ENCODE measurements at regions of chr3 and their contacts with region 1.

Region 1: DNA sequence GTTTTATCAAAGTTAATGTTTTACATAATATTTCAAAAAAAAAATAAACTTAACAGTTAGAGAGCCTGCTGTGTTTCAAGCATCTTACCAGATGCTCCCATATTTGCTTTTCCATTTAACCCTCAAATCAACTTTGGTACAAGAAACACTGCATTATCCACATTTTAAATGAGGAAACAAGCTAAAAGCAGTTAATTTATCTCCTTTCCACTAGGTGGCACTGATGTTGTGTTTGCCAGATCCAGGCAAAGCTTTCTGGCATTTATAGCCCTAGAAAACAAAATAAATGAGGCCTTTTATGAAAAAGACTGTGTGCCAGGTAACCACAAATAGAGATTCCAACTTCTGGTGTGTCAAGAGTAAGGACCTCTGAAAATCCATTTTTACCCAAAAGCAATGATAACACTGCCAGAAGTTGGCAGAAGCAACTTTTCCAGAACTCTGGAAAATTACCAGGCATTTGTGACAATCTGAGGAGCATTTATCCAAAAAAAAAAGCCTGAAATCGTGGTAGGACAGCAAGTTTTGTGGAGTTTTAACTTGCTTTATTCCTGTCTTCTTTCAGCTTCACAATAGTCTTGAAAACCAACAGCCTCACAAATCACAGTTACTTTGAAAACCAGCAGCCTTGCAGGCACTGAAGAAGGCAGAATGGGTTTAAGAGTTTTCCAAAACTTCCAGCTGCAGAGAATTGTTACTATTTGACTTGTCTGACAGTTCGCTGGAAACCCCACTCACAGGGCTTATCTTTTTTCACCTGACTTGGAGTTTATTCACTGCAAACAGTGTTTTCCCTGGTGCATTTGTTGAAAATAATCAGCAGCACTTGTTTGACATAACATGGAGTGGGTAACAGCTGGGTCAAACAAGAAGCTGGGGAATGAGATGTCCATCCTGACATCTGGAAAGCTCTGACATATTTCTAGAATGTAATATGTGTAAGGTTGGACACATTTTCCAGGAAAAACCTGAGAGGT is 9.2 kb downstream of the FAM162A start:
- DNase-seq: no peak
- ATAC-seq: peak; percentile 59
- H3K4me3 ChIP-seq: no peak overlapping the region
- H3K27ac ChIP-seq: no peak overlapping the region
- H3K4me1 ChIP-seq: no peaks in the 10 kb centered on the region; the same call in 1 of the 2 replicates
- H3K27me3 ChIP-seq: no peaks in the 10 kb centered on the region
- CTCF ChIP-seq: peak; percentile 52 to 77 (median 75); a peak in 5 of 6 replicates
- EP300 ChIP-seq: no peak
- POLR2A ChIP-seq: no peak
- RAD21 ChIP-seq: peak; percentile 88

Region 2: DNA sequence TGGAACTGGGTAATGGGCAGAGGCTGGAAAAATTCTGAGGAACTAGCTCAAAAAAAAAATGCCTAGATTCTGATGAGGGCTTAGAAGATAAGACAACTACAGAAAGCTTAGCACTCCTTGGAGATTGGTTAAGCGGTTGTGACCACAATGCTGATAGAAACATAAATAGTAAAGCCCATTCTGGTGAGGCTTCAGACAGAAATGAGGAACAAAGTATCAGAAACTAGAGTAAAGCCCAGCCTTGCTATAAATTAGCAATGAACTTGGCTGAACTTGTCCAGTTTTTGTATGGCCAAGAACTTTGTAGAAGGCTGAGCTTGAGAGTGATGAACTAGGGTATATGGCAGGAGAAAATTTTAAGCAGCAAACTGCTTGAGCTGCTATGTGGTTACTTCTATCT is 669.0 kb before region 1 on chr3:
- CTCF ChIA-PET with region 1: no interaction called
- POLR2A ChIA-PET with region 1: no interaction called
- RAD21 ChIA-PET with region 1: no interaction called
- SMC1A ChIA-PET with region 1: no interaction called
- in situ Hi-C with region 1: no loop called
- intact Hi-C with region 1: no loop called
- DNase-seq: peak; percentile 57
- ATAC-seq: peak; percentile 96
- H3K4me3 ChIP-seq: no peak overlapping the region
- H3K27ac ChIP-seq: no peak overlapping the region
- H3K4me1 ChIP-seq: peaks cover 11% of the 10 kb centered on the region
- H3K27me3 ChIP-seq: no peaks in the 10 kb centered on the region
- CTCF ChIP-seq: no peak
- EP300 ChIP-seq: no peak
- POLR2A ChIP-seq: no peak
- RAD21 ChIP-seq: no peak

Region 3: GRCh38 chr3:122235147-122235546 is 158.0 kb before region 1 on chr3:
- CTCF ChIA-PET with region 1: no interaction called
- POLR2A ChIA-PET with region 1: no interaction called
- RAD21 ChIA-PET with region 1: no interaction called
- SMC1A ChIA-PET with region 1: no interaction called
- in situ Hi-C with region 1: no loop called
- intact Hi-C with region 1: no loop called
- DNase-seq: peak; percentile 46
- ATAC-seq: peak; percentile 63
- H3K4me3 ChIP-seq: peak overlapping the region; percentile 22; the same call in 1 of the 2 replicates
- H3K27ac ChIP-seq: peak overlapping the region; percentile 86
- H3K4me1 ChIP-seq: peaks cover 38% of the 10 kb centered on the region
- H3K27me3 ChIP-seq: no peaks in the 10 kb centered on the region
- CTCF ChIP-seq: no peak
- EP300 ChIP-seq: no peak
- POLR2A ChIP-seq: no peak
- RAD21 ChIP-seq: no peak

Region 4: GRCh38 chr3:122403489-122403888 is 10.3 kb after region 1 on chr3:
- CTCF ChIA-PET with region 1: interaction called, 26 read pairs
- POLR2A ChIA-PET with region 1: no interaction called
- RAD21 ChIA-PET with region 1: interaction called, 5 read pairs
- SMC1A ChIA-PET with region 1: interaction called, 70 read pairs
- in situ Hi-C with region 1: no loop called
- intact Hi-C with region 1: no loop called
- DNase-seq: no peak
- ATAC-seq: no peak
- H3K4me3 ChIP-seq: no peak overlapping the region
- H3K27ac ChIP-seq: no peak overlapping the region
- H3K4me1 ChIP-seq: no peaks in the 10 kb centered on the region
- H3K27me3 ChIP-seq: no peaks in the 10 kb centered on the region
- CTCF ChIP-seq: no peak
- EP300 ChIP-seq: no peak
- POLR2A ChIP-seq: no peak
- RAD21 ChIP-seq: no peak

Region 5: GRCh38 chr3:122409446-122409845 is 16.3 kb after region 1 on chr3:
- CTCF ChIA-PET with region 1: interaction called, 26 read pairs
- POLR2A ChIA-PET with region 1: interaction called, 11 read pairs
- RAD21 ChIA-PET with region 1: interaction called, 5 read pairs
- SMC1A ChIA-PET with region 1: interaction called, 70 read pairs
- in situ Hi-C with region 1: no loop called
- intact Hi-C with region 1: no loop called
- DNase-seq: no peak
- ATAC-seq: peak; percentile 39
- H3K4me3 ChIP-seq: no peak overlapping the region
- H3K27ac ChIP-seq: no peak overlapping the region
- H3K4me1 ChIP-seq: peaks cover 2% of the 10 kb centered on the region; the same call in 1 of the 2 replicates
- H3K27me3 ChIP-seq: no peaks in the 10 kb centered on the region
- CTCF ChIP-seq: no peak
- EP300 ChIP-seq: no peak
- POLR2A ChIP-seq: no peak
- RAD21 ChIP-seq: no peak

Region 6: DNA sequence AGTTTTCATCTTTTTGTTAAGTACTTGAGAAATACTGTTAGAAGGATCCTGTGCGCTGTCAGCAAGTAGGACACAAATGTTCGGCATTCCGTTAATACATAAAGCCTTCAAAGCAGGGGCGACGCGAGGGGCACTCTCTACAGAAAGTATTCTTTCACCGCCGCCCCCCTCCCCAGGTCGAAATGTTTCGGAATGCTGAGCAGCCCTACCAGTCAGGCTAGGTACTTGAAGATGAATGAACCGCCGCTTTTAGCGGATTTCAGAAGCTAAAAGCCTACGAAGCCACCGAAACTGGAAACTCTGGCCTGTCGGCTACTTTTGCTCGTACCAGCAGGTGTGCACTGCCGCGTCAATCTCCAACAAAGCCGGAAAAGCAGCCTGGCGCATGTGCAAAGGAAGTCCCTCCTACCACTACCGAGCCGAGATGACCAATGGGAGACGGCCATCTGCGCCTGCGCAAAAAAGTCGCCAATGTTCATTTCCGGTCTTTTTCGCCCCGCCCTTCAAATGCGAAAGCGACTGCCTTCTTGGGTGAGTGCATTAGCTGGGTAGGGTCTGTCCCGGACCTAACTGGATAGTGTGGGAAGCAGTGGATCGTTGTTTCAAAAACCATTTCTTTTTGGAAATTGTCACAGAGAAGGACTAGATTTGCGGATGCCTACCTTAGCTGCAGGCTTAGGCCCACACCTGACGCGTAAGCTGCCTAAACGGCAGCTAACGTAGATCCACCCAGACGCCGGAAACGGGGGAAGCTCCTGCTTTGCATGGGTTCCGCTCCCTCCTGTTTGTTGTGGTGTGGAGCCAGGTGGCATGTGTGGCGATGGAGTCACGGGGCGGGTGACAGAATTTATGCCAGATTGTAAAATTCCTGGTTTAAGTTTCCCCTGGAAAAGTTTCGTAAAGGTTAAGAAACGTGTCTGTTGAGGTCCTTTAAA is 22.8 kb after region 1 on chr3 and contains the start of gene WDR5B:
- CTCF ChIA-PET with region 1: interaction called, 29 read pairs
- POLR2A ChIA-PET with region 1: interaction called, 11 read pairs
- RAD21 ChIA-PET with region 1: interaction called, 8 read pairs
- SMC1A ChIA-PET with region 1: interaction called, 70 read pairs
- in situ Hi-C with region 1: no loop called
- intact Hi-C with region 1: no loop called
- DNase-seq: peak; percentile 98
- ATAC-seq: peak; percentile 95
- H3K4me3 ChIP-seq: peak within 1 kb of the TSS; percentile 77
- H3K27ac ChIP-seq: peak within 1 kb of the TSS; percentile 91
- H3K4me1 ChIP-seq: peaks cover 14% of the 10 kb centered on the region; the same call in 1 of the 2 replicates
- H3K27me3 ChIP-seq: no peaks in the 10 kb centered on the region
- CTCF ChIP-seq: no peak; a peak in 1 of 6 replicates
- EP300 ChIP-seq: peak; percentile 33 to 43; a peak in 1 of 4 replicates
- POLR2A ChIP-seq: peak; percentile 93
- RAD21 ChIP-seq: no peak
- polyA plus RNA-seq, gene WDR5B: 1.7 to 2.4 TPM

Region 7: GRCh38 chr3:122458992-122459391 is 65.8 kb after region 1 on chr3:
- CTCF ChIA-PET with region 1: interaction called, 35 read pairs
- POLR2A ChIA-PET with region 1: interaction called, 3 read pairs
- RAD21 ChIA-PET with region 1: interaction called, 5 read pairs
- SMC1A ChIA-PET with region 1: interaction called, 17 read pairs
- in situ Hi-C with region 1: no loop called
- intact Hi-C with region 1: no loop called
- DNase-seq: no peak
- ATAC-seq: 0 out of 3 replicates have a peak, but pooled peaks have one; percentile 30
- H3K4me3 ChIP-seq: no peak overlapping the region
- H3K27ac ChIP-seq: no peak overlapping the region
- H3K4me1 ChIP-seq: no peaks in the 10 kb centered on the region
- H3K27me3 ChIP-seq: no peaks in the 10 kb centered on the region
- CTCF ChIP-seq: peak in 2 of 3 experiments; percentile 15 to 44; a peak in 2 of 6 replicates
- EP300 ChIP-seq: no peak
- POLR2A ChIP-seq: no peak
- RAD21 ChIP-seq: peak; percentile 63

Region 8: GRCh38 chr3:122533931-122534334 is 140.8 kb after region 1 on chr3:
- CTCF ChIA-PET with region 1: no interaction called
- POLR2A ChIA-PET with region 1: no interaction called
- RAD21 ChIA-PET with region 1: interaction called, 5 read pairs
- SMC1A ChIA-PET with region 1: interaction called, 4 read pairs
- in situ Hi-C with region 1: no loop called
- intact Hi-C with region 1: loop called (anchors 10 kb)
- DNase-seq: peak; percentile 79
- ATAC-seq: peak; percentile 100
- H3K4me3 ChIP-seq: no peak overlapping the region
- H3K27ac ChIP-seq: no peak overlapping the region; the same call in 1 of the 2 replicates
- H3K4me1 ChIP-seq: peaks cover 6% of the 10 kb centered on the region
- H3K27me3 ChIP-seq: no peaks in the 10 kb centered on the region
- CTCF ChIP-seq: no peak
- EP300 ChIP-seq: peak; percentile 67 to 90; a peak in 3 of 4 replicates
- POLR2A ChIP-seq: no peak
- RAD21 ChIP-seq: peak; percentile 26; the same call in 1 of the 2 replicates

Region 9: DNA sequence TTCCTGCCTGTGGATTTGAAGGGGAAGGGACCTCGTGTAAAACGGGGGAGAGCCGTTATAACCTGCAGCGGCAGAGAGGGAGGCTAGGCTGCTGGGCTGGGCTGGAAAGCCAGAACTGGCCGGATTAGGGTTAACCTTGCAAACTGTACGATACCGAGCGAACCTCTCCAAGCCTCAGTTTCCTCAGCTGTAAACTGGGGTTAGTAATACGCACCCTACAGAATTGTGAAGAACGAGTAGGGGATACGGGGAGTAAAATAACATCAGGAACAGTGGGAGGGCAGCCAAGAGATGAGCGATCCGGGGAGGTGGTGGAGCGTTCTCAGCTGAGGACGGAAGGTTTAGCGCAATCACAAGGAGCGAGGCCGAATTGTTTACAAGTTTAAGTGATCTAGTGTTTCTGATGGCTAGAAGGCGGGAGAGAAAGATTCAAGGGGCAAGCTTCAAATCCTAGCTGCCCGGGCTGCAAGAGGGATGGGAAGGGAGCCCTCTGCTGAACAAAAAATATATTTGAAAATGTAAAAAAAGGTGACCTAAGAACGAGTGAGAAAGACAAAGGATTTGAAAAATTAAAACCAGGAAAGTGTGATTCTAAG is 635.2 kb after region 1 on chr3:
- CTCF ChIA-PET with region 1: interaction called, 4 read pairs
- POLR2A ChIA-PET with region 1: no interaction called
- RAD21 ChIA-PET with region 1: interaction called, 3 read pairs
- SMC1A ChIA-PET with region 1: no interaction called
- in situ Hi-C with region 1: no loop called
- intact Hi-C with region 1: loop called (anchors 10 kb)
- DNase-seq: no peak
- ATAC-seq: peak; percentile 61
- H3K4me3 ChIP-seq: peak overlapping the region; percentile 50; the same call in 1 of the 2 replicates
- H3K27ac ChIP-seq: no peak overlapping the region
- H3K4me1 ChIP-seq: peaks cover 6% of the 10 kb centered on the region
- H3K27me3 ChIP-seq: peaks cover 18 to 33% of the 10 kb centered on the region in 2 experiments
- CTCF ChIP-seq: peak; percentile 35 to 67 (median 37); a peak in 4 of 6 replicates
- EP300 ChIP-seq: no peak
- POLR2A ChIP-seq: no peak
- RAD21 ChIP-seq: peak; percentile 73

Measured in GM12878 (cell line).